Activated B cell treated with CpG ODN at 0.5 μM for 24 hours (primary cell): ENCODE measurements at regions of chr3 and their contacts with region 1.

Region 1: DNA sequence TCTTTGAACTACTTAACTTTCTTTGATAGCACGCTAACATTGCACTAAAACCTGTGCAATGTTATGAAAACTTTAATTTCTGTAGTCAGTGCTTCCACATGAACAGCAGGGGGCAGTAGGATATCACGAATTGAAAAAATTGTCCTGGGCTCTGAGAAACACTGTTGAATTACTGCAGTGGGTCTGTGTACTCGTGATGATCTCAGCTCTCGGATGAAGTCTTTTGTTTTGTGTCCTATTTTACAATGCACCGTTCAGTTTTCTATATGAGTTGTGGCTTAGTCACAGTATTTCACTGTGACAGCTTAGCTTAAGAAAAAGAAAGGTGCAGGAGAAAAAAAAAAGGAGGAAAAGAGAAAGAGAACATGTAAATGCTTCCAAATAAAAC is 141.3 kb upstream of the CCDC54 start:
- DNase-seq: no peak
- ATAC-seq: peak; percentile 60
- H3K4me3 Mint-ChIP-seq: peak overlapping the region; percentile 3
- H3K27ac Mint-ChIP-seq: no peak overlapping the region
- H3K4me1 Mint-ChIP-seq: peaks cover 10% of the 10 kb centered on the region
- H3K27me3 Mint-ChIP-seq: peaks cover 3% of the 10 kb centered on the region
- CTCF ChIP-seq: peak; percentile 83

Region 2: GRCh38 chr3:106731230-106731629 is 504.7 kb before region 1 on chr3:
- CTCF ChIA-PET with region 1: no interaction called
- POLR2A ChIA-PET with region 1: no interaction called
- intact Hi-C with region 1: no loop called
- DNase-seq: no peak
- ATAC-seq: no peak
- H3K4me3 Mint-ChIP-seq: no peak overlapping the region
- H3K27ac Mint-ChIP-seq: no peak overlapping the region
- H3K4me1 Mint-ChIP-seq: no peaks in the 10 kb centered on the region
- H3K27me3 Mint-ChIP-seq: no peaks in the 10 kb centered on the region
- CTCF ChIP-seq: no peak

Region 3: DNA sequence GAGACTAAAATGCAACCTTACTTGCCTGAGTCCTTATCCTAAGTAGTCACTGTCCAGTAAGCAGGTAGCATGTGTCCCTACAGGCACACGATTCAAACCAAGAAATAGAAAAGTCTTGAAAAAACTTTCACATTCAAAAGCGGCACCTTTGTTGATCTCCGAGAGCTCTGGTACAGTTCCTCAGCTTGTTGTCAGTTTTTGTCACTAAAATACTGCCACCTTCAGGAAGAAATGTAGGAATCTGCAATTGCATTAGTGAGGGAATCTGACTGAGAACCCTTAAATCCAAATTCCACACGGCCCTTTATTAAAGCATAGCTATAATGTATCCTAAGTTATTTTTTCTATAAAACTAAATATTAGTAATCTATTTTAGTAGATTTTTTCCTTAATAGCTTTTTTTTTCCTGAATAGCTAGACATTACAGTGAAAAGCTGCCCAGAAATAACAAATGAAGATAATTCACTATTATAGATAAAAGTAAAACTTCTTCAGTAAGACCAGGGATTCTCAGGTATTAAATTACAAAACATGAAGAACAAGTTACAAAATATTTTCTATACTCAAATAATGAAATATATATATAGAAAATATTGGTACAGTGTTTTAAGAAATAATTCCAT is 185.4 kb after region 1 on chr3:
- CTCF ChIA-PET with region 1: interaction called, 34 read pairs
- POLR2A ChIA-PET with region 1: no interaction called
- intact Hi-C with region 1: loop called (anchors 1 kb)
- DNase-seq: no peak
- ATAC-seq: peak; percentile 57
- H3K4me3 Mint-ChIP-seq: peak overlapping the region; percentile 62
- H3K27ac Mint-ChIP-seq: no peak overlapping the region
- H3K4me1 Mint-ChIP-seq: peaks cover 16% of the 10 kb centered on the region
- H3K27me3 Mint-ChIP-seq: no peaks in the 10 kb centered on the region
- CTCF ChIP-seq: peak; percentile 78

Region 4: GRCh38 chr3:107543666-107544065 is 307.7 kb after region 1 on chr3:
- CTCF ChIA-PET with region 1: interaction called, 4 read pairs
- POLR2A ChIA-PET with region 1: no interaction called
- intact Hi-C with region 1: loop called (anchors 1 kb)
- DNase-seq: no peak
- ATAC-seq: no peak
- H3K4me3 Mint-ChIP-seq: no peak overlapping the region
- H3K27ac Mint-ChIP-seq: no peak overlapping the region
- H3K4me1 Mint-ChIP-seq: peaks cover 18% of the 10 kb centered on the region
- H3K27me3 Mint-ChIP-seq: no peaks in the 10 kb centered on the region
- CTCF ChIP-seq: no peak

Region 5: DNA sequence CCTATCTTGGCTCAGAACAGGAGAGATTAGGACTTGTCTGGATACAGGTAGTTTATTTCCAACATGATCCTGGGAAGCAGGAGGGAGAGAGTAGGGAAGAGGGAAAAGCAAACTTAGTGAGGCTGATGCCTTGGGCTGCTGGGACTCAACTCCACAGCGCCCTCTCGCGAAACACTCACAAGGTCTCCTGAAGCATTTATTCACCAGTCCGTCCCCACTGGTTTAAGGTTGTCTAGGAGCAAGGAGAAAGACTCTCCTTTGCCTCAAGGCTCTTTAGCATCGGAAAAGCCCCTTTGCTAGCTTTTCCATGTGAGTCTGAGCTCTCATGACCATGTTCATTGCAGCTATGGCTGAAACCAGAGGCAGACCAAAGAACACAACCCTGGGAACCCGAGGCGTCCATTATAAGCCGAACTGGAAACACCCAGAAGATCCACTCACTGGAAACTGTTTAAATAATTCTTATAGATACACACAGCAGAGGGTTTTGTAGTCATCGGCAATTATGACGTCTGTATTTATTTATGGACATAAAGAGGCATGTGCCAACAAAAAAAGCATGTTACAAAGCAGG is 610.4 kb after region 1 on chr3:
- CTCF ChIA-PET with region 1: interaction called, 3 read pairs
- POLR2A ChIA-PET with region 1: no interaction called
- intact Hi-C with region 1: loop called (anchors 1 kb)
- DNase-seq: no peak
- ATAC-seq: no peak
- H3K4me3 Mint-ChIP-seq: no peak overlapping the region
- H3K27ac Mint-ChIP-seq: no peak overlapping the region
- H3K4me1 Mint-ChIP-seq: no peaks in the 10 kb centered on the region
- H3K27me3 Mint-ChIP-seq: peaks cover 9% of the 10 kb centered on the region
- CTCF ChIP-seq: no peak

Region 6: GRCh38 chr3:108221911-108222852 is 986.3 kb after region 1 on chr3 and contains the start of gene IFT57:
- CTCF ChIA-PET with region 1: no interaction called
- POLR2A ChIA-PET with region 1: no interaction called
- intact Hi-C with region 1: loop called (anchors 5 kb)
- DNase-seq: peak; percentile 95
- ATAC-seq: peak; percentile 91
- H3K4me3 Mint-ChIP-seq: peak within 1 kb of the TSS; percentile 100
- H3K27ac Mint-ChIP-seq: peak within 1 kb of the TSS; percentile 100
- H3K4me1 Mint-ChIP-seq: peaks cover 66% of the 10 kb centered on the region
- H3K27me3 Mint-ChIP-seq: no peaks in the 10 kb centered on the region
- CTCF ChIP-seq: no peak
- total RNA-seq, gene IFT57: 63.2 and 64.9 TPM in 2 replicates

Region 7: GRCh38 chr3:108477511-108478147 is 1241.7 kb after region 1 on chr3:
- CTCF ChIA-PET with region 1: interaction called, 17 read pairs
- POLR2A ChIA-PET with region 1: no interaction called
- intact Hi-C with region 1: loop called (anchors 1 kb)
- DNase-seq: peak; percentile 35
- ATAC-seq: peak; percentile 85
- H3K4me3 Mint-ChIP-seq: no peak overlapping the region
- H3K27ac Mint-ChIP-seq: no peak overlapping the region
- H3K4me1 Mint-ChIP-seq: peaks cover 4% of the 10 kb centered on the region
- H3K27me3 Mint-ChIP-seq: no peaks in the 10 kb centered on the region
- CTCF ChIP-seq: peak; percentile 52